Activated CD4-positive, alpha-beta T cell treated with anti-CD3 and anti-CD28 coated beads for 36 hours (primary cell): ENCODE measurements at regions of chr1 and their contacts with region 1.

Region 1: DNA sequence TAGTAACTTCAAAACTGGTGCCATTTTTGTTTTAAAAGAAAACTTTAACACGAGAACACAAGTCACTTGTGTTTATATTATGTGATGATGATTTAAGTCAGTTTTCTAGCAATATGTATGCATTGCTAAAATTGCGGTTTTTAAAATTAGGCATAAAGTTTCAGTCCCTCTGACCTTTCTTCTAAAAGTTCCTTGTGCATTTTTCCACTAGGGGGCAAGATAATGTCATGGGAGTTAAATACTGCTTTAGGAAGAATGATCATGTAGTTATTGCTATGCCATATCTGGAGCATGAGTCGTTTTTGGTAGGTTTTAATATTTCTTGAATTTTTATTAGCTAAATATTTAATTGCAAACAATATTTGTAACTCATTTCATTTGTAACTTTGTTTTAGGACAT is 10.7 kb downstream of the CDC7 start:
- DNase-seq: no peak
- ATAC-seq: no peak
- H3K4me3 Mint-ChIP-seq: no peak overlapping the region
- H3K27ac Mint-ChIP-seq: no peak overlapping the region
- H3K4me1 Mint-ChIP-seq: peaks cover 6% of the 10 kb centered on the region
- H3K27me3 Mint-ChIP-seq: no peaks in the 10 kb centered on the region

Region 2: DNA sequence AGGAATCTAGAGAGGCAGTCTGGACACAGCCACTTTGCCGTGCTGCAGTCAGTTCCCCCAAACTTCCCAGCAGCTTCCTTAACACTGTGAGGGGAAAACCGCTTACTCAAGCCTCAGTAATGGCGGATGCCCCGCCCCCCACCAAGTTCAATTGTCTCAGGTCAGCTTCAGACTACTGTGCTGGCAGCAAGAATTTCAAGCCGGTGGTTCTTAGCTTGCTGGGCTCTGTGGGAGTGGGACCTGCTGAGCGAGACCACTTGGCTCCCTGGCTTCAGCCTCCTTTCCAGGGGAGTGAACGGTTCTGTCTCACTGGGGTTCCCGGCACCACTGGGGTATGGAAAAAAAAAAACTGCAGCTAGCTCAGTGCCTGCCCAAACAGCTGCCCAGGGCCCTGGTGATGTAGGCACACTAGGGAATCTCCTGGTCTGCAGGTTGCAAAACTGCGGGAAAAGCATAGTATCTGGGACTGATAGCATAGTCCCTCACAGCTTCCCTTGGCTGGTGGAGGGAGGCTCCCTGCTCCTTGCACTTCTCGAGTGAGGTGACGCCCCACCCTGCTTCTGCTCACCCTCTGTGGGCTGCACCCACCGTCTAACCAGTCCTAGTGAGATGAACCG is 83.1 kb before region 1 on chr1:
- CTCF ChIA-PET with region 1: no interaction called
- POLR2A ChIA-PET with region 1: no interaction called
- intact Hi-C with region 1: no loop called
- DNase-seq: no peak
- ATAC-seq: no peak
- H3K4me3 Mint-ChIP-seq: no peak overlapping the region
- H3K27ac Mint-ChIP-seq: no peak overlapping the region
- H3K4me1 Mint-ChIP-seq: no peaks in the 10 kb centered on the region
- H3K27me3 Mint-ChIP-seq: peaks cover 25% of the 10 kb centered on the region

Region 3: DNA sequence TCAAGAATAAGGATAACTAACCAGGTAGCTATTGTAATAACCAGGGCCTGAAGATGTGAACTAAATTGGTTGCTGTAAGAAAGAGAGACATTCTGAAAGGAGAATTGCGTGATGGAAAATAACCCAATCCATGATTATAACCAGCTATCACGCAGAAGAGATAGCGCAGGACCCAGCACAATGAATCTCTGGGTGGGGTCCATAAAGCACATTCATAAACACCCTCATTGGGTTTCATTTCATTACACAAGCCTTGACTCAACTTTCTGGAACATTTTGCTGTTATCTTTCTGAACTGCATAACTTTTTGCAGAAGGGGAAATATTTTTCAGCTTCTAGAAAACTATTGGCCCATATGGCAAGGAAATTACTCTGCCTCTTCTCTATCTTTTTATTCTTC is 56.1 kb before region 1 on chr1:
- CTCF ChIA-PET with region 1: no interaction called
- POLR2A ChIA-PET with region 1: no interaction called
- intact Hi-C with region 1: loop called in 1 of 2 experiments (anchors 5 kb)
- DNase-seq: no peak
- ATAC-seq: no peak
- H3K4me3 Mint-ChIP-seq: no peak overlapping the region
- H3K27ac Mint-ChIP-seq: no peak overlapping the region
- H3K4me1 Mint-ChIP-seq: no peaks in the 10 kb centered on the region
- H3K27me3 Mint-ChIP-seq: peaks cover 1% of the 10 kb centered on the region

Region 4: DNA sequence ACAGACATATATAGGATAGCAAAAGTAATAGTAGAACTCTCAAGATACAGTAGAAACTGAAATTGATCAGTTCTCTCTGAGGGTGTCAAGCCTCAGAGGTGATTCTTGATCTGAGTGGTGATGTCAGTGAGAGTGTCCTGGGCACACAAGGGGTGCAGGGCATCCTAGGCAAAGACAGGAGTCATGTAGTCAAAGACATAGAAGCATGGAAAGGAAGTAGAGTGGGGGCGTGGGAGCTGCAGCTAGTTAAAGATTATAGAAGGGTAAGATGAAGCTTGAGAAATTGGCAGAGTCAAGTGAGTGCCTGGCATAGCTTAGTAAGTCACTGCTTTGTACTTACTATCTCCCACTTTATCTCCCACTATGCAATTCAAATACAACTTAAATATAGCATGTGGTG is 12.1 kb after region 1 on chr1:
- CTCF ChIA-PET with region 1: interaction called, 27 read pairs
- POLR2A ChIA-PET with region 1: interaction called, 3 read pairs
- intact Hi-C with region 1: no loop called
- DNase-seq: peak; percentile 66
- ATAC-seq: peak; percentile 97
- H3K4me3 Mint-ChIP-seq: no peak overlapping the region
- H3K27ac Mint-ChIP-seq: peak overlapping the region; percentile 1
- H3K4me1 Mint-ChIP-seq: peaks cover 29% of the 10 kb centered on the region
- H3K27me3 Mint-ChIP-seq: no peaks in the 10 kb centered on the region

Region 5: DNA sequence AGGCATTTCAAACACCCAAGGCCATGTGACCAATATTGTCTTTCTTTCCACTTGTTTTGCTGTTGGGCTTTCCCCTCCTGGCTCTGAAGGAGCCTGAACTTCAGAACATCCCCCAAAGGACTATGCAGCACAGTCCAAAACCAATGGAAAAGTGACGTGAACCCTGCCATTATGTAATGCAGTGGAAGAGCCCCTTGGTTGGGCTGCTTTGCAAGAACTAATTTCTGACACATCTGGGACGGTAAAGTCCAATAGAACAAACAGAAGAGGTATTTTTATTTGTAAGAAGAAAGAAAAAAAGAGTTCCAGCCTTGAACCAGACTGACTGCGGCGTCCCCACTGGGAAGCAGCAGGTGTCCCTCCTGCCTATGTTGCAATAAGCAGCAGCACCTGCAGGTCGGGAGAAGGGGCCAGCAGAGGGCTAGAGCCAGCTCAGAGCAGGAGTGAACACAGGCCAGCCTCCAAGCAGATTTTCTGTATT is 105.9 kb after region 1 on chr1:
- CTCF ChIA-PET with region 1: no interaction called
- POLR2A ChIA-PET with region 1: no interaction called
- intact Hi-C with region 1: no loop called
- DNase-seq: peak; percentile 25
- ATAC-seq: no peak
- H3K4me3 Mint-ChIP-seq: no peak overlapping the region
- H3K27ac Mint-ChIP-seq: no peak overlapping the region
- H3K4me1 Mint-ChIP-seq: no peaks in the 10 kb centered on the region
- H3K27me3 Mint-ChIP-seq: no peaks in the 10 kb centered on the region

Region 6: DNA sequence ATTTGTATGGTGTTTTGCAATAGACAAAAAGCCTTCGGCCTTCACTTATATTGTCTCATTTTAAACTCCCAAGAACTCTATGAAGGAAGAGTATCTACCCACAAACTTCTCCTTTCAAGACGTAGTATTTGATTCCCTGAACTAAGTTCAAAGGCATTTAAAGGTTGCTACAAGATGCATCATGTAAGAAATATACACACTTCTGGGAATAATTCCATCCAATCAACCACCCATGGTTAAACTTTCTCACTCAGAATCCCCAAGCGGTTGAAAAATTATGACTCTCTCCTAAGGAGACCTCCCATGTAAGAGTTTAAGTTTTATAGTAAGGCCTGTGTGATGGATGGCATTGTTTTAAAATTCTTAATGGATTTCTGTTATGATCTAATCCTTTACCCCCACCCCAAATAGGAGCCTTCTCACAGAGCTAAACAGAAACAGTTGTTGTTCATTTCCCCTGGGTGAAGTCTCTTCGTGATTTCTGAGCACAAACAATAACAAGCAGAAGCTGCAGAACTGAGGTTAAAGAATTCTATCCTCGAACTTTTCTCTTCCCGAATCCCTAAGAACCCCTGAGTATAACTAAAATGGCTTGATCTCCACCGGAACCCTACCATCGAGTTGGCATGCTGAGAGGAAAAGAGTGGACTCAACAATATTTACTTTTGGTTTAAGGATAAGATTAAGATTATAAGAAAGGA is 189.5 kb after region 1 on chr1:
- CTCF ChIA-PET with region 1: no interaction called
- POLR2A ChIA-PET with region 1: no interaction called
- intact Hi-C with region 1: no loop called
- DNase-seq: no peak
- ATAC-seq: no peak
- H3K4me3 Mint-ChIP-seq: no peak overlapping the region
- H3K27ac Mint-ChIP-seq: no peak overlapping the region
- H3K4me1 Mint-ChIP-seq: peaks cover 33% of the 10 kb centered on the region
- H3K27me3 Mint-ChIP-seq: no peaks in the 10 kb centered on the region

Region 7: GRCh38 chr1:91924146-91924545 is 412.8 kb after region 1 on chr1:
- CTCF ChIA-PET with region 1: interaction called, 30 read pairs
- POLR2A ChIA-PET with region 1: no interaction called
- intact Hi-C with region 1: loop called (anchors 1 kb)
- DNase-seq: no peak
- ATAC-seq: no peak
- H3K4me3 Mint-ChIP-seq: no peak overlapping the region
- H3K27ac Mint-ChIP-seq: no peak overlapping the region
- H3K4me1 Mint-ChIP-seq: peaks cover 9% of the 10 kb centered on the region
- H3K27me3 Mint-ChIP-seq: no peaks in the 10 kb centered on the region

Region 8: DNA sequence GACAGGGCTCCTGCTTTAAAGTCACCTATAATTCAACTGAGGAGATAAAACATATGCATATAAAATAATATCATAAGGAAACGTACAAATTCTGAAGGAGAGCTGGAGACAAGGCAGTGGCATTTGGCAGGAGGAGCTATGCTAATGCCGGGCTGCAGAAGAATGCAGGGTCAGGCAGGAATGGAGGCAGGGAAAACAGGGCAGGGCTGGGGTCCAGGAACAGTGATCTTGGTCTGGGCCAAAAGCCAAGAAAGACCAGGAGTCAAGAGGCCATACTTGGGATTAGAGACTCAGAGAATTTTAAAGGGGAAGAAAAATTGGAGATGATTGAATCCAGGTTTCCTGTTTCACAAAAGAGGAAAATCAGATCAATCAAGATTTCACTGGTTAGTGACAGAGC is 417.9 kb after region 1 on chr1:
- CTCF ChIA-PET with region 1: interaction called, 30 read pairs
- POLR2A ChIA-PET with region 1: no interaction called
- intact Hi-C with region 1: loop called (anchors 1 kb)
- DNase-seq: no peak
- ATAC-seq: no peak
- H3K4me3 Mint-ChIP-seq: no peak overlapping the region
- H3K27ac Mint-ChIP-seq: no peak overlapping the region
- H3K4me1 Mint-ChIP-seq: peaks cover 3% of the 10 kb centered on the region
- H3K27me3 Mint-ChIP-seq: no peaks in the 10 kb centered on the region